Activated T-helper 2 cell treated with anti-CD3 and anti-CD28 coated beads, Interferon-gamma antibody, Interleukin-2, Interleukin-4, amounts not matched to agents 10 μg/mL and 5 μg/mL and 100 μg/mL, durations not matched to agents 14 hours and 24 hours and 36 hours (primary cell): ENCODE measurements at regions of chr13 and their contacts with region 1.

Region 1: GRCh38 chr13:79457948-79458347 is 23.0 kb upstream of the NDFIP2 start:
- DNase-seq: no peak
- H3K4me3 Mint-ChIP-seq: no peak overlapping the region
- H3K27ac Mint-ChIP-seq: peak overlapping the region; percentile 77
- H3K4me1 Mint-ChIP-seq: peaks cover 66% of the 10 kb centered on the region
- H3K27me3 Mint-ChIP-seq: no peaks in the 10 kb centered on the region

Region 2: DNA sequence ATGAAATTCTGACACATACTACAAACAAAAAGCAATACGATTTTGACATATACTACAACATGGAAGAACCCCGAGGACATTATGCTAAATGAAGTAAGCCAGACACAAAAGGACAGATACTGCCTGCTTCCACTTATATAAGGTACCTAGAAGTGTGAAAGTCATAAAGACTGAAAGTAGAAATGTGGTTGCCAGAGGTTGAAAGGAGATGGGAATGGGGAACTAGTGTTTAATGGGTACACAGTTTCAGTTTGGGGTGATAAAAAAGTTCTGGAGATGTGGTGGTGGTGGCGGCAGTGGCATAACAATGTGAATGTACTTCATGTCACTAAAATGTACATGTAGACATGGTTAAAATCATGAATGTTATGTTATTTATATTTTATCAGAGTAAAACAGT is 10.9 kb after region 1 on chr13:
- intact Hi-C with region 1: loop called (anchors 1 kb)
- DNase-seq: no peak
- H3K4me3 Mint-ChIP-seq: no peak overlapping the region
- H3K27ac Mint-ChIP-seq: peak overlapping the region; percentile 7
- H3K4me1 Mint-ChIP-seq: peaks cover 43% of the 10 kb centered on the region
- H3K27me3 Mint-ChIP-seq: no peaks in the 10 kb centered on the region

Region 3: DNA sequence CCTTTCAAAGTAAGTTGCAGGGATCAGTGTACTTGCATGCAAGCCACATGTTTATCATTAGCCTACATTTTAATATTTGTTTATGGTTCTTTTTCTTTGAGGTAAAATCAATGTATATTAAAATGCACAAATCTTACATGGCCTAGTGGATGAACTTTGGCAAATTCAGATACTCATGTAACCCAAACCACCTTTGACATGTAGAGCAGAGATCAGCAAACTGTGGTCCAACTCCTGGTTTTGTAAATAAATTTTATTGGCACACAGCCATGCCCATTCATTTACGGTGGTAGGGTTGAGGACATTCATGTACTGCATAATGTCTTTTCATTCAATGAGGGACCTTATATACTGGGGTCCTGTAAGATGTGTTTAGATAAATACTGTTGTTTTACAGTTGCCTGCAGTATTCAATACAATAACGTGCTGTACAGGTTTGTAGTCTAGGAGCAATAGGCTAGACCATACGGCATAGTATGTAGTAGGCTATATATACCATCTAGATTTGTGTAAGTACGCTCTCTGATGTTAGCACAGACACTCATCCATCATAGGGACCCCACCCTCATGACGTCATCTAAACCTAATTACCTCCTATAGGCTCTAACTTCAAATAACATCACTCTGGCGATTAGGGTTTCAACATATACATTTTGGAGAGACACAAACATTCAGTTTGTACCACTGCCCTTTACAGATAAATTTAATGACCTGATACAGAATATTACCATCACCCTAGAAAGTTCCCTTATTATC is 28.7 kb after region 1 on chr13:
- intact Hi-C with region 1: loop called (anchors 1 kb)
- DNase-seq: no peak
- H3K4me3 Mint-ChIP-seq: peak overlapping the region; percentile 87
- H3K27ac Mint-ChIP-seq: peak overlapping the region; percentile 87
- H3K4me1 Mint-ChIP-seq: peaks cover 73% of the 10 kb centered on the region
- H3K27me3 Mint-ChIP-seq: no peaks in the 10 kb centered on the region

Region 4: GRCh38 chr13:79501538-79502232 is 43.7 kb after region 1 on chr13:
- intact Hi-C with region 1: loop called (anchors 1 kb)
- DNase-seq: no peak
- H3K4me3 Mint-ChIP-seq: peak overlapping the region; percentile 43
- H3K27ac Mint-ChIP-seq: peak overlapping the region; percentile 80
- H3K4me1 Mint-ChIP-seq: peaks cover 87% of the 10 kb centered on the region
- H3K27me3 Mint-ChIP-seq: no peaks in the 10 kb centered on the region

Region 5: DNA sequence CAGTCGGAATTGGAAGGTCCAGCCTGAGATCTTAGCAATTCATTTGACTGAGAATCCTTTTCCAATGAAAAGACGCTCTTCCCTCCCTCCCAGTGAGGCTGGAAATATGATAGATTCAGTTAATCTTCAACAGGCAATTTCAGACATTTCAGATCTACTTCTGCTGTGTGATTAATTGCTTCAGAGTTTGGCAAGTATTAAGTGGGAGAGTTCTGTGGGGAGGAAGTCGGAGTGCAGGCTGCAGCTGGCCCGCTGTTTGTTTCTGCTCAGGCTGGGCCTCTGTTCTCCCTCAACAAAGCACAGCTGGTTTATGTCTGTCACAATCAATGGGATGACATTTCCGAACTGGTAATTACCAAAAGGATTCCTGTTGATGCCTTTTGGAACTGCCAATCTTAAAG is 201.2 kb after region 1 on chr13:
- intact Hi-C with region 1: no loop called
- DNase-seq: no peak
- H3K4me3 Mint-ChIP-seq: no peak overlapping the region
- H3K27ac Mint-ChIP-seq: no peak overlapping the region
- H3K4me1 Mint-ChIP-seq: peaks cover 17% of the 10 kb centered on the region
- H3K27me3 Mint-ChIP-seq: peaks cover 35% of the 10 kb centered on the region